K562 (cell line): ENCODE measurements at regions of chr10 and their contacts with region 1.

Region 1: DNA sequence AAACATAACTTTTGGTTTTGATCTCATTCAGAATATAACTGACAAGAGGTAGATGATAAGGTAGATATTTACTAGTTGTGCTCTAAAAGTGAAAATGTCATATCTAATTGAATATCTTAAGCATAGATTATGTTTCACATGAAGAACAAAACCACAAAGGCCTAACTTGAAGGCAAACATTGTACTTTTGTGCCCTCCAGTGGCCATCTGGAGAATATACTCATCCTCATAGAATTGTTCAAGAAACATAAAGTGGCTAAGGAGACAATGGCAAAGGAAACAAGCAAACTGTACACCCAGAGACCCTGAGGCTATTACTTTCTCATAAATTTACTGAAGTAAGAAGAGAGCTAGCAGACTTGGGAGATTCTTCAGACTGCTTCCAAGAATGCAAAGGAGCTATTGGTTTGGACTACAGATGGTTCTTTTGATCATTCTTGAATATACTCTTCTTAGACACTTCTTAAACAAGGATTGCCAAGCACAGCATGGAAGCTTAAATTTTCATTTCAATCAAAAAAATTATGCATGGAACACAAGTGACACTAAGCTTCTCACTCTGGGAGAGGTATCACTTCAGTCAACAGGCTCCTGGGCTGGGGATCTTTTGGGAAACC is 98.2 kb upstream of the DKK1 start:
- DNase-seq: peak; percentile 41 to 68 (median 43)
- ATAC-seq: peak; percentile 83
- H3K4me3 ChIP-seq: no peak overlapping the region
- H3K27ac ChIP-seq: no peak overlapping the region
- H3K4me1 ChIP-seq: no peaks in the 10 kb centered on the region
- H3K27me3 ChIP-seq: no peaks in the 10 kb centered on the region
- CTCF ChIP-seq: peak; percentile 56 to 83 (median 65); a peak in 5 of 6 replicates
- EP300 ChIP-seq: no peak
- POLR2A ChIP-seq: no peak
- RAD21 ChIP-seq: peak; percentile 87 to 95

Region 2: GRCh38 chr10:50794490-50794889 is 1421.4 kb before region 1 on chr10:
- CTCF ChIA-PET with region 1: no interaction called
- POLR2A ChIA-PET with region 1: no interaction called
- in situ Hi-C with region 1: no loop called
- intact Hi-C with region 1: loop called (anchors 10 kb)
- DNase-seq: no peak
- ATAC-seq: no peak
- H3K4me3 ChIP-seq: no peak overlapping the region
- H3K27ac ChIP-seq: no peak overlapping the region
- H3K4me1 ChIP-seq: no peaks in the 10 kb centered on the region
- H3K27me3 ChIP-seq: no peaks in the 10 kb centered on the region
- CTCF ChIP-seq: no peak
- EP300 ChIP-seq: no peak
- POLR2A ChIP-seq: no peak
- RAD21 ChIP-seq: no peak

Region 3: GRCh38 chr10:51001587-51001986 is 1214.3 kb before region 1 on chr10:
- CTCF ChIA-PET with region 1: interaction called, 9 read pairs
- POLR2A ChIA-PET with region 1: no interaction called
- in situ Hi-C with region 1: loop called (anchors 25 kb)
- intact Hi-C with region 1: loop called (anchors 1 kb)
- DNase-seq: peak in 3 of 4 experiments; percentile 18 to 32 (median 31)
- ATAC-seq: peak; percentile 86
- H3K4me3 ChIP-seq: no peak overlapping the region
- H3K27ac ChIP-seq: no peak overlapping the region
- H3K4me1 ChIP-seq: no peaks in the 10 kb centered on the region
- H3K27me3 ChIP-seq: no peaks in the 10 kb centered on the region
- CTCF ChIP-seq: peak; percentile 38 to 69 (median 55); a peak in 5 of 6 replicates
- EP300 ChIP-seq: no peak
- POLR2A ChIP-seq: no peak
- RAD21 ChIP-seq: peak; percentile 57 to 71

Region 4: GRCh38 chr10:51010977-51011376 is 1204.9 kb before region 1 on chr10:
- CTCF ChIA-PET with region 1: interaction called, 7 read pairs
- POLR2A ChIA-PET with region 1: no interaction called
- in situ Hi-C with region 1: loop called (anchors 25 kb)
- intact Hi-C with region 1: no loop called
- DNase-seq: peak; percentile 52 to 62 (median 60)
- ATAC-seq: peak; percentile 77
- H3K4me3 ChIP-seq: no peak overlapping the region
- H3K27ac ChIP-seq: no peak overlapping the region
- H3K4me1 ChIP-seq: no peaks in the 10 kb centered on the region
- H3K27me3 ChIP-seq: no peaks in the 10 kb centered on the region
- CTCF ChIP-seq: peak; percentile 51 to 78 (median 73); a peak in 5 of 6 replicates
- EP300 ChIP-seq: no peak
- POLR2A ChIP-seq: no peak
- RAD21 ChIP-seq: peak; percentile 38 to 71

Region 5: DNA sequence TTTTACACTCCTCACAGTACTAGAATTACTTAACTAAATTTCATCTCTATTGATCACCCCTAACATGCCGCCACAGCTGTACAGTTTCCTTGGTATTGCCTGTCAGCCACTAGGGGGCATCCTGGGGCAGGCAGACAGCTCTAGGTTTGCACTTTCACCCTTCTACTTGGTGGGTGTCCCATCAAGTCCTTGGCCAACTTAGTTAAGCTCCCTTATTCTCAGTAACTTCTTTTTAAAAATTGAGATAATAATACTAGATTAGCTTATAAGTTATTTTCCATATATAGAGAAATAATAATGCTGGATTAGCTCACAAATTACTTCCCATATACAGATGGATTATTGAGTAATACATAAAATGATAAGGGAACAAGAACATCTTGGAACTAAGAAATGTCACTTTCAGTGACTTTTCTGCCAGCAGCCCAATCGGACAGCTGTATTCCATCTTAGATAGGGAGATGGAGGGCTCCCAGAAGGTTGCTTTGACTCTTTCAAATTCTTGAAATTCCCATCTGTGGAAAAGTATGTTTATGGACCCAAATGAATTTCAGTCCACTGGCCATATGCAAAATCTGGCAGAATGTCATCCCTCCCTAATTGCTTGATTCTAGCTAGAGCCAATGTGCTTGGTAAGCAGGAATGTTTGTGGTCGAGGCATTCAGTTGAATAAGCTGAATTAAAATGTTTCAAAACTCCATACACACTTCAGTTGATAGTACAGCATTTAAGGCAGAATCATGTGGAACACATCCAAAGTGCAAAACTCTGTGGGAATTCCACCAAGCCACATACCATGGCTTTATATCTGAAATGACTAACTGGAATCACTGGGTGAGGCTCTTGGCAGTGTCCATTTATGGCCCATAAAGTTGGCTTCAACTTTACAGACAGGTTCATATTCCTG is 826.2 kb before region 1 on chr10:
- CTCF ChIA-PET with region 1: interaction called, 7 read pairs
- POLR2A ChIA-PET with region 1: no interaction called
- in situ Hi-C with region 1: no loop called
- intact Hi-C with region 1: loop called (anchors 5 kb)
- DNase-seq: peak; percentile 15 to 55 (median 52)
- ATAC-seq: peak; percentile 79
- H3K4me3 ChIP-seq: no peak overlapping the region
- H3K27ac ChIP-seq: no peak overlapping the region
- H3K4me1 ChIP-seq: no peaks in the 10 kb centered on the region
- H3K27me3 ChIP-seq: no peaks in the 10 kb centered on the region
- CTCF ChIP-seq: peak; percentile 51 to 77 (median 66)
- EP300 ChIP-seq: no peak
- POLR2A ChIP-seq: no peak
- RAD21 ChIP-seq: peak; percentile 75 to 78

Region 6: GRCh38 chr10:52027055-52027705 is 188.7 kb before region 1 on chr10:
- CTCF ChIA-PET with region 1: no interaction called
- POLR2A ChIA-PET with region 1: no interaction called
- in situ Hi-C with region 1: no loop called
- intact Hi-C with region 1: no loop called
- DNase-seq: no peak
- ATAC-seq: no peak
- H3K4me3 ChIP-seq: no peak overlapping the region
- H3K27ac ChIP-seq: no peak overlapping the region
- H3K4me1 ChIP-seq: no peaks in the 10 kb centered on the region
- H3K27me3 ChIP-seq: no peaks in the 10 kb centered on the region
- CTCF ChIP-seq: no peak
- EP300 ChIP-seq: no peak
- POLR2A ChIP-seq: no peak
- RAD21 ChIP-seq: no peak